MCF 10A (cell line): ENCODE measurements at regions of chr4 and their contacts with region 1.

Region 1: GRCh38 chr4:39458505-39459300 is at the starts of genes LIAS and RPL9:
- DNase-seq: peak; percentile 98
- H3K4me3 Mint-ChIP-seq: peak within 1 kb of the TSS; percentile 95
- H3K27ac Mint-ChIP-seq: peak within 1 kb of the TSS; percentile 100
- H3K4me1 Mint-ChIP-seq: peaks cover 7% of the 10 kb centered on the region
- H3K27me3 Mint-ChIP-seq: no peaks in the 10 kb centered on the region
- CTCF ChIP-seq: no peak
- total RNA-seq, gene LIAS: 21.6 and 24.6 TPM in 2 replicates
- total RNA-seq, gene RPL9: 1,405 and 1,620 TPM in 2 replicates

Region 2: DNA sequence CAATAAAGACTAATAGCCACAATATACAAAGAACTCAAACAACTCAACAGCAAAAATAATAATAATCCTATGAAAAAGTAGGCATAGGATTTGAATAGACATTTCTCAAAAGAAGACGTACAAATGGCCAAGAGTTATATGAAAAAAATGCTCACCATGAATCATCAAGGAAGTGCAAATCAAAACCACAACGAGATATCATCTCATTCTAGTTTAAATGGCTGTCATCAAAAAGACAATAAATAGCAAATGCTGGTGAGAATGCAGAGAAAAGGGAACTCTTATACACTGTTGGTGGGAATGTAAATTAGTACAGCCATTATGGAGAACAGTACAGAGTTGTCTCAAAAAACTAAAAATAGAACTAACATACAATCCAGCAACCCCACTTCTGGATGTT is 620.9 kb before region 1 on chr4:
- CTCF ChIA-PET with region 1: no interaction called
- POLR2A ChIA-PET with region 1: no interaction called
- intact Hi-C with region 1: no loop called
- DNase-seq: peak; percentile 29
- H3K4me3 Mint-ChIP-seq: no peak overlapping the region
- H3K27ac Mint-ChIP-seq: peak overlapping the region; percentile 36
- H3K4me1 Mint-ChIP-seq: peaks cover 13% of the 10 kb centered on the region
- H3K27me3 Mint-ChIP-seq: no peaks in the 10 kb centered on the region
- CTCF ChIP-seq: no peak

Region 3: GRCh38 chr4:39146211-39146610 is 312.5 kb before region 1 on chr4:
- CTCF ChIA-PET with region 1: no interaction called
- POLR2A ChIA-PET with region 1: no interaction called
- intact Hi-C with region 1: no loop called
- DNase-seq: no peak
- H3K4me3 Mint-ChIP-seq: no peak overlapping the region
- H3K27ac Mint-ChIP-seq: no peak overlapping the region
- H3K4me1 Mint-ChIP-seq: no peaks in the 10 kb centered on the region
- H3K27me3 Mint-ChIP-seq: no peaks in the 10 kb centered on the region
- CTCF ChIP-seq: no peak

Region 4: DNA sequence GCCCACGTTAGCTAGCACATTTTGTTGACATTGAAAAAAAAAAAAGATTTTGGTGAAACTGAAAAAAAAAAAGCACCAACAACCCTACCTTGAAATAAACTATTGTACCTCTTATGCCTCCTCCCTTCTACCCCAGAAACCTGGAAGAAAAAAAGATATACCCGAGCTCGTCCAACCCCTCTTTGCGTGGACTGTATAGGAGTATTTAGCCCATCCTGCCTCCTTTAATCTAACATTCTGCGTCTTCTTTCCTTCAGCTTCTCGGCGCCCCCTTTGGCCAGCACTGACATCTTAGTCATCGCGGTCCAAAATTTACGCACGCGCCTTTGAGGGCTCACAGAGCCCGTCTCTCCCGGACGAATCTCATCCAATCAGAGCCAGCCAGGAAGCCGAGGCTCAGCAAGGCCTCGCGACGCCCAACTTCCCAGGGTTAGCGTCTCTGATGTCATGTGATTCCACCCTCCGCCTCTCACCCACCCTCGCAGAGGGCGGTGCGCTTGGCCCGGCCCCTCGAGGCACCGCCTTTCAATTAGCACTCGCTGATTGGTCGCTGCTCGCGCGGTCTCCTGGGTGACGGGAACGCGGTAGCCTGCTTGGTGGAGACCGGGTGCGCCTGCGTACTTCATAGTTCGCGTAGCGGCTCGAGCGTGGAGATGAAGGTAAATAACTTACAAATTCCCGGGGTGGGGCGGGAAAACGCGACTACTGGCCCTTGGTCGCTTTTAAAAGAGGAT is 276.6 kb before region 1 on chr4 and contains the start of gene WDR19:
- CTCF ChIA-PET with region 1: no interaction called
- POLR2A ChIA-PET with region 1: interaction called, 11 read pairs
- intact Hi-C with region 1: loop called (anchors 2 kb)
- DNase-seq: peak; percentile 100
- H3K4me3 Mint-ChIP-seq: no peak within 1 kb of the TSS
- H3K27ac Mint-ChIP-seq: no peak within 1 kb of the TSS
- H3K4me1 Mint-ChIP-seq: no peaks in the 10 kb centered on the region
- H3K27me3 Mint-ChIP-seq: no peaks in the 10 kb centered on the region
- CTCF ChIP-seq: peak; percentile 29
- total RNA-seq, gene WDR19: 32.5 and 39.6 TPM in 2 replicates

Region 5: GRCh38 chr4:39319678-39320077 is 139.0 kb before region 1 on chr4:
- CTCF ChIA-PET with region 1: interaction called, 3 read pairs
- POLR2A ChIA-PET with region 1: interaction called, 4 read pairs
- intact Hi-C with region 1: loop called (anchors 10 kb)
- DNase-seq: peak; percentile 89
- H3K4me3 Mint-ChIP-seq: no peak overlapping the region
- H3K27ac Mint-ChIP-seq: peak overlapping the region; percentile 75
- H3K4me1 Mint-ChIP-seq: peaks cover 7% of the 10 kb centered on the region
- H3K27me3 Mint-ChIP-seq: no peaks in the 10 kb centered on the region
- CTCF ChIP-seq: no peak

Region 6: GRCh38 chr4:39365830-39366771 is 92.6 kb before region 1 on chr4 and contains the start of gene RFC1:
- CTCF ChIA-PET with region 1: no interaction called
- POLR2A ChIA-PET with region 1: interaction called, 72 read pairs
- intact Hi-C with region 1: no loop called
- DNase-seq: peak; percentile 91
- H3K4me3 Mint-ChIP-seq: peak within 1 kb of the TSS; percentile 91
- H3K27ac Mint-ChIP-seq: peak within 1 kb of the TSS; percentile 91
- H3K4me1 Mint-ChIP-seq: peaks cover 28% of the 10 kb centered on the region
- H3K27me3 Mint-ChIP-seq: no peaks in the 10 kb centered on the region
- CTCF ChIP-seq: no peak
- total RNA-seq, gene RFC1: 84.7 and 99.5 TPM in 2 replicates

Region 7: GRCh38 chr4:39446751-39447573 is 11.7 kb before region 1 on chr4:
- CTCF ChIA-PET with region 1: interaction called, 4 read pairs
- POLR2A ChIA-PET with region 1: interaction called, 65 read pairs
- intact Hi-C with region 1: no loop called
- DNase-seq: no peak
- H3K4me3 Mint-ChIP-seq: no peak overlapping the region
- H3K27ac Mint-ChIP-seq: no peak overlapping the region
- H3K4me1 Mint-ChIP-seq: no peaks in the 10 kb centered on the region
- H3K27me3 Mint-ChIP-seq: no peaks in the 10 kb centered on the region
- CTCF ChIP-seq: no peak

Region 8: GRCh38 chr4:39469429-39470077 is 10.8 kb after region 1 on chr4:
- CTCF ChIA-PET with region 1: interaction called, 6 read pairs
- POLR2A ChIA-PET with region 1: interaction called, 35 read pairs
- intact Hi-C with region 1: no loop called
- DNase-seq: peak; percentile 80
- H3K4me3 Mint-ChIP-seq: no peak overlapping the region
- H3K27ac Mint-ChIP-seq: no peak overlapping the region
- H3K4me1 Mint-ChIP-seq: peaks cover 13% of the 10 kb centered on the region
- H3K27me3 Mint-ChIP-seq: no peaks in the 10 kb centered on the region
- CTCF ChIP-seq: peak; percentile 71

Region 9: DNA sequence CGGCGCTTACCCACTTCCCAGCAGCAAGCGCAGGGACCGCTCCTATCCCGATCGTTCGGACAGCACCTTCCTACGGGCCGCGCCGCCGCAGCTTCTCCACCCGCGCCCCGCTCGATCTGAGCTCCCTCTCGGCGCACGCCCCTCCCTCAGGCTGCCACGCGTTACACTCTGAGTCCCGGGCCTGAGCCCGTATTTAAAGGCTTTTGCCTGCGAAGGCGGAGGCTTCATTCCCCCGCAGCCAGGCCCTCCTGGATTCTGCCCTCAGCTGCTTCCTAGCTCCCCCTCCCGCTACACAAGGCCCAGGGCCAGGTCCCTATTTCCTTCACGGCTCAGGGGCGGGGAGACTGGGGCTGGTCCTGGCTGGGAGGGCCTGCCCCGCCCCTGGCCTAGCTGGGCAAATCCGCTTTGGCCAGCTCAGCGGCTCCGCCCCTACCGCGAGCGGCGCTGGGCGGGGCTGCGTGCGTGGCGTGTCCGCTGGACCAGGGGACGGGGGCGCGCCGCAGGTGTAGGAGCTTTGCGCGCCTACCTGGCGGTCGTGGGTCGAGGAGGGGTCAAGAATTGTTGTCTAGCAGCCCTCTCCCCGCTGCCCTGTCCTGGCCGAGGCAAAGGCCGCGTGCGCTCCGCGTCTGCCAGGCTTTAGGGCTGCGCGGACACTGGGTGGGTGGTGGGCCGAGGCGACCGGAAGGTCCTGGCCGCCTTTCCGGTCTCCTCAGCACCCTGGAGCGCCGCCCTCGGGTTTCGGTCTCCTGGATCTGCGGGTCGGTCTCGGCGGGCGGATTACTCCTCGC is 68.8 kb after region 1 on chr4 and contains the start of gene UGDH:
- CTCF ChIA-PET with region 1: interaction called, 3 read pairs
- POLR2A ChIA-PET with region 1: interaction called, 14 read pairs
- intact Hi-C with region 1: no loop called
- DNase-seq: peak; percentile 98
- H3K4me3 Mint-ChIP-seq: peak within 1 kb of the TSS; percentile 98
- H3K27ac Mint-ChIP-seq: peak within 1 kb of the TSS; percentile 94
- H3K4me1 Mint-ChIP-seq: peaks cover 9% of the 10 kb centered on the region
- H3K27me3 Mint-ChIP-seq: no peaks in the 10 kb centered on the region
- CTCF ChIP-seq: no peak
- total RNA-seq, gene UGDH: 50.9 and 61.7 TPM in 2 replicates